ENCODE measurements at regions of chr20 and their contacts with region 1.

Region 1: DNA sequence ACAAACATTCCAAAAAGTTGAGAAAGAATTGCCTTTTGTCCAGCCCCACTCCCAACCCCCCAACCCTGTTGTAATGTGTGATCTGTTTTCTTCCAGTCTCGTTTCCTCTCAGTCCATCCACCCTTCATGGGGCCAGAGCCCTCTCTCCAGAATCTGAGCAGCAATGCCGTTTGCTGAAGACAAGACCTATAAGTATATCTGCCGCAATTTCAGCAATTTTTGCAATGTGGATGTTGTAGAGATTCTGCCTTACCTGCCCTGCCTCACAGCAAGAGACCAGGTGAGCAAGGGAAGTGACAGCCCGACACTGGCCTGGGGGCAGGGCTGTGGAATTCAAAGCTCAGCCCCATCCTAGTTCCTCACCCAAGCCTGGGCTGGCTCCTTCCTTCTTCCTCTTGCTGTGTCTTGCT is 7.8 kb downstream of the MAVS start:
- DNase-seq: no peak
- H3K4me3 ChIP-seq: no peak overlapping the region
- H3K4me3 Mint-ChIP-seq: no peak overlapping the region
- H3K27ac ChIP-seq: no peak overlapping the region
- H3K27ac Mint-ChIP-seq: peak overlapping the region in 3 of 7 donors; percentile 22 to 62 (median 24)
- H3K4me1 ChIP-seq: peaks cover 10% of the 10 kb centered on the region
- H3K4me1 Mint-ChIP-seq: peaks cover 8 to 20% (median 9%) of the 10 kb centered on the region in 4 donors
- H3K27me3 ChIP-seq: no peaks in the 10 kb centered on the region
- H3K27me3 Mint-ChIP-seq: no peaks in the 10 kb centered on the region

Region 2: GRCh38 chr20:3679749-3680700 is 174.4 kb before region 1 on chr20:
- CTCF ChIA-PET with region 1: interaction called, 5 read pairs
- POLR2A ChIA-PET with region 1: no interaction called
- intact Hi-C with region 1: loop called (anchors 1 kb)
- DNase-seq: no peak
- H3K4me3 ChIP-seq: no peak overlapping the region
- H3K4me3 Mint-ChIP-seq: peak overlapping the region in 1 of 8 donors; percentile 31
- H3K27ac ChIP-seq: no peak overlapping the region
- H3K27ac Mint-ChIP-seq: no peak overlapping the region
- H3K4me1 ChIP-seq: no peaks in the 10 kb centered on the region
- H3K4me1 Mint-ChIP-seq: peaks cover 3 to 9% (median 7%) of the 10 kb centered on the region in 4 donors
- H3K27me3 ChIP-seq: peaks cover 7% of the 10 kb centered on the region
- H3K27me3 Mint-ChIP-seq: peaks cover 38 to 48% of the 10 kb centered on the region in 2 donors

Region 3: DNA sequence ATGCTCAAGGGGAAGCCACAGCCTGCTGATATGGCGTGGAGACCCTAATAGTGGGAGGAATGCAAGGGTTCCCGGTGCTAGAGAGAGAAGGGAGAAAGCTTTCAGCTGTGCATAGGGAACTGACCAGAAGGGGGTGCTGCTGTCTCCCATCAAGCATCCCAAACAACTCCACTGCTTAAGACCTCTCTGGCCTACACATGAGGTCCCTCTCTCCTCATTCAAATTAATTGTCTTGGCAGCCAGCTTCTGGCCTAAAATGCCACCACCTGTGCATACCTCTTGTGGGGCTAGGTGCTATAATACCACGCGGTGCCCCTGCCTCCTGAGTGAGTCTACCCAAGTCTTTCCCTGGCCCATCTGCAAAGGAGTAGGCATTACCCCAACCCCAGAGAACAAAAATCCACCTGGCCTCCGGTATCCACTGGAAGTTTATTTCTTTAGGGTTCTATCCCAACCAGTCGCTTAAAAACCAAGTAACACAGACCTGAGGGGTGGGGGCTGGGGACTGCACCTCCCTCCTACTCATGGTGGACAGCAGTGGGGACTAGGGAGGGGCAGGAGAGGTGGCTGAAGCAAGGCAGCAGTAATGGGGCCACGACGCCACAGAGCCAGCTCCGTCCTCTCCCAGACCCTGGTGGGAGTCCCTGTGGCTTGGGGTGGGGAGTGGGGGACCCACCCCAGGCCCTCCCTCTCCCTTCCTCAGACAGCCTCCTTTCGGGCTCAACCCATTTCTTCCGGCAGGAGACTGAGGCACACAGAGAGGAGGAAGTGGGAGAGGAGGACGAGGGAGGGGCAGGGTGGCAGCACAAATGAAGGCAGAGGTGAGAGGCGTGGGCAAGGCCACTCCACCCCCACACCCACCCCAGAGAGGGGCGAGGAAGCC is 101.1 kb before region 1 on chr20:
- CTCF ChIA-PET with region 1: interaction called, 38 read pairs
- POLR2A ChIA-PET with region 1: interaction called, 4 read pairs
- intact Hi-C with region 1: loop called (anchors 1 kb)
- DNase-seq: peak; percentile 51 to 61 (median 57)
- H3K4me3 ChIP-seq: no peak overlapping the region
- H3K4me3 Mint-ChIP-seq: peak overlapping the region in 1 of 8 donors; percentile 17
- H3K27ac ChIP-seq: no peak overlapping the region
- H3K27ac Mint-ChIP-seq: peak overlapping the region in 4 of 7 donors; percentile 53 to 84 (median 66)
- H3K4me1 ChIP-seq: no peaks in the 10 kb centered on the region
- H3K4me1 Mint-ChIP-seq: peaks cover 2 to 14% (median 12%) of the 10 kb centered on the region in 4 donors
- H3K27me3 ChIP-seq: no peaks in the 10 kb centered on the region
- H3K27me3 Mint-ChIP-seq: peaks cover 0 to 2% of the 10 kb centered on the region in 2 donors

Region 4: DNA sequence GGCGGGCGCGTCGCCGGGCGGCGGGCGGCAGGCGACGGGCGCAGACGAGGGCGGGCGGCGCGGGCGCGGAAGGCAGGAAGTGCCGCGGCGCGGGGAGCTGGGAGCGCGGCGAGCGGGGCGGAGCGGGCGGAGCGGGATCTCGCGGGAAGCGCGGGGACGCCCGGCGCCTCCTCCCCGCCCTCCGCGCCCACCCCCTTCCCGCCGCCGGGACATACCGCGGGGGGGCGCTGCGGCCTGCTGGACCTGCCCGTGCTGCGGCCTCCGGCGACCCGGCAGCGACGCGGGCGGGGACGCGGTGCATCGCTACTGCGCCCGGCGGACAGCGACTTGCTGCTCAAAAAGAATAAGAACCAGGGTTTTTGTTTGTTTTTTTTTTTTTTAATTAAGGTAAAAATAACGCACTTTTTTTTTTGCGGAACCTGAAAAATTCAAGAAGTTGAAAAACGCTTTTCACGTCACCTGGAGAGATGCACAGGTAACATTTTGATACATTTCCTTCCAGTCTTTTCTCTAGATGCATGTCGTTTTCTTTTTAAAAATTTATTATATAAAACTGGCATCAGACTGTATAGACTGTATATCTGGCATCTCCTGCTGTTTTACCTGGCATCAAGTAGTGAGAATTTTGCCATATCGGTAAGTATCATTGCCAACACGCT is 67.7 kb before region 1 on chr20 and contains the start of gene CENPB:
- CTCF ChIA-PET with region 1: interaction called, 61 read pairs
- POLR2A ChIA-PET with region 1: interaction called, 7 read pairs
- intact Hi-C with region 1: loop called (anchors 1 kb)
- DNase-seq: peak; percentile 82 to 94 (median 88)
- H3K4me3 ChIP-seq: peak within 1 kb of the TSS; percentile 29 to 38
- H3K4me3 Mint-ChIP-seq: peak within 1 kb of the TSS; percentile 74 to 87 (median 84)
- H3K27ac ChIP-seq: peak within 1 kb of the TSS; percentile 12
- H3K27ac Mint-ChIP-seq: peak within 1 kb of the TSS; percentile 79 to 93 (median 88)
- H3K4me1 ChIP-seq: peaks cover 37% of the 10 kb centered on the region
- H3K4me1 Mint-ChIP-seq: peaks cover 23 to 41% (median 33%) of the 10 kb centered on the region in 4 donors
- H3K27me3 ChIP-seq: no peaks in the 10 kb centered on the region
- H3K27me3 Mint-ChIP-seq: no peaks in the 10 kb centered on the region
- total RNA-seq, gene CENPB: 52.2 to 56.7 TPM

Region 5: DNA sequence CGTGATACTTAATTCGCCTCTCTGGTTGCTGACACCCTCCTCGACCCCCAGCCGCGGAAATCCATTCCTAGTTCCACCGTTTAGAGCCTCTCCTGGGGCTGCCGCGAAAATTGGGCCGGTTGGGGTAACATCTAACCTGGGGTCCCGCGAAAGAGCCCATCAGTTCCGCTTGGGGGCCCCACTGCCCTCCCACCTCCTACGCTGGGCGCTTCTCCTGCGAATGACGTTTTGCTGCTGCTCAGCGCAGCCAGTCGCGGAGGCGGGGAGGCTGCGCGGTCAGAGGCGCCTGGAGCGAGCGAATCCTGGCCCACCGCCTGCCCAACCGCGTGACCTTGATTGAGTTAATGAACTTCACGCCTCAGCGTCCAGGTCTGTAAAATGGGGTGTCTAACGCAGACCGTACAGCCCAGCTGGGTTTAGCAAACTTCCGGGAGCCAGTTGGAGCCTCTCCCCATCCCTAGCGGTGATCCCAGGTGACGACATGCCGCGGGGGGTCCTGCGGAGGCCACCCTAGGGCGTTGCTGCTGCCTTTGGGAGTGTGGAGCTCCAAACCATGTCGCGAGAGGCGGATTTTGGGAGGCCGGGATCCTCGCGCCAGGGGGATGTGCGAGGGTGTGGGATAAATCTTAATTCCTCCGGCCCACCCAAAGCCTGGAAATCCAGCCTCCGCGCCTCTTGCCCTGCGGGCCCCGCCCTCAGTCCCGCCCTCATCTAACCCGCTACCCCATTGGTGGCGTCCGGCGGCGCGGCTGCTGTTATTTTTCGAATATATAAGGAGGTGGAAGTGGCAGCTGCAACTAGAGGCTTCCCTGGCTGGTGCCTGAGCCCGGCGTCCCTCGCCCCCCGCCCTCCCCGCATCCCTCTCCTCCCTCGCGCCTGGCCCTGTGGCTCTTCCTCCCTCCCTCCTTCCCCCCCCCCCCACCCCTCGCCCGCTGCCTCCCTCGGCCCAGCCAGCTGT is 58.7 kb before region 1 on chr20 and contains the start of gene CDC25B:
- CTCF ChIA-PET with region 1: interaction called, 7 read pairs
- POLR2A ChIA-PET with region 1: interaction called, 10 read pairs
- intact Hi-C with region 1: loop called (anchors 2 kb)
- DNase-seq: peak; percentile 83 to 94 (median 85)
- H3K4me3 ChIP-seq: peak within 1 kb of the TSS; percentile 94 to 97
- H3K4me3 Mint-ChIP-seq: peak within 1 kb of the TSS; percentile 98 to 100 (median 100)
- H3K27ac ChIP-seq: peak within 1 kb of the TSS; percentile 86
- H3K27ac Mint-ChIP-seq: peak within 1 kb of the TSS; percentile 95 to 99 (median 97)
- H3K4me1 ChIP-seq: peaks cover 38% of the 10 kb centered on the region
- H3K4me1 Mint-ChIP-seq: peaks cover 21 to 54% (median 35%) of the 10 kb centered on the region in 4 donors
- H3K27me3 ChIP-seq: no peaks in the 10 kb centered on the region
- H3K27me3 Mint-ChIP-seq: no peaks in the 10 kb centered on the region
- total RNA-seq, gene CDC25B: 410 to 420 TPM

Region 6: GRCh38 chr20:3820048-3820900 is 34.2 kb before region 1 on chr20 and contains the start of gene AP5S1:
- CTCF ChIA-PET with region 1: interaction called, 16 read pairs
- POLR2A ChIA-PET with region 1: interaction called, 11 read pairs
- intact Hi-C with region 1: loop called (anchors 2 kb)
- DNase-seq: peak; percentile 90 to 97 (median 91)
- H3K4me3 ChIP-seq: peak within 1 kb of the TSS; percentile 78 to 88
- H3K4me3 Mint-ChIP-seq: peak within 1 kb of the TSS; percentile 83 to 94 (median 91)
- H3K27ac ChIP-seq: peak within 1 kb of the TSS; percentile 99
- H3K27ac Mint-ChIP-seq: peak within 1 kb of the TSS; percentile 96 to 99 (median 99)
- H3K4me1 ChIP-seq: peaks cover 53% of the 10 kb centered on the region
- H3K4me1 Mint-ChIP-seq: peaks cover 30 to 66% (median 50%) of the 10 kb centered on the region in 4 donors
- H3K27me3 ChIP-seq: no peaks in the 10 kb centered on the region
- H3K27me3 Mint-ChIP-seq: no peaks in the 10 kb centered on the region
- total RNA-seq, gene AP5S1: 10.4 to 11.1 TPM

Region 7: DNA sequence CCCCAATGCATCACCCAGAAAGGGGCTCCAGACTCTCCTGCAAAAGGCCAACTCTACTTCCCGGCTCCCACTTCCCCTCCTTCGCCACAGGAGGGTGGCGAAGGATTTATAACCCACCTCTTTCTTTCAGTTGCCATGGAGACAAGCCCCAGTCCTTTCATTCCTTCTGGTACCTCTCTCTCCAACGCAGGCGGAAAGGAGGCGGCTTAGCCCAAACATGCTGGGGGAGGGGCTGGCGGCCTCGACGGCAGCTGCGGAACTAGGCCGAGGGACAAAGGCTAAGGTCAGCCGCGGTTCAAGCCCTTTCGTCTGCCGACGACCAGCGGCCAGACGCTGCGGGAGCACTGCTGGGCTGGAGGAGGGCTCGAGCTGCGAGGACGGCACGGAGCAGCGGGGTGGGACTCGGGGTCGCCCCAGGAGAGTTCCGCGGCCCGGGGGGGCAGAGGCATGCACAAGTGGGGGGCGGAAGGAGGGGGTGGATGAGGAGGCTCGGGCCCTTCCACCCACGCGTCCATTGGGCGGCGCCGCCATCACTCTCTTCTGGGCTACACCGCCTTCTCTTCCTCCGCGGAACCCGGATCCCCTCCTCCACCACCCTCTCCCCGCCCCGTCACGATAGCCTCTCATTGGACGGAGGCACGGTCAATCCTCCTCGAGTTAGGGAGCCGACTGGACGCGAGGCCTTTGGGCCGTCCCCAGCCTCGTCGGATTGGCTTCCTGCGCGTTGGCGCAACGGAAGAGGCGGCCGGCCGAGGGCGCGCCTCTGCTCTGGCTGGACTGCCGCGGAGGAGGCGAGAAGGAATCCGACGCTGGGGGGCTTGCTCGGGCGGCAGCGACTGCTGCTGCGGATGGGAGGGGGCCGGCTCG is 34.4 kb after region 1 on chr20 and contains the start of gene PANK2:
- CTCF ChIA-PET with region 1: interaction called, 10 read pairs
- POLR2A ChIA-PET with region 1: no interaction called
- intact Hi-C with region 1: no loop called
- DNase-seq: peak; percentile 95 to 98 (median 96)
- H3K4me3 ChIP-seq: peak within 1 kb of the TSS; percentile 96 to 98
- H3K4me3 Mint-ChIP-seq: peak within 1 kb of the TSS; percentile 96 to 100 (median 98)
- H3K27ac ChIP-seq: peak within 1 kb of the TSS; percentile 79
- H3K27ac Mint-ChIP-seq: peak within 1 kb of the TSS; percentile 96 to 98 (median 97)
- H3K4me1 ChIP-seq: peaks cover 46% of the 10 kb centered on the region
- H3K4me1 Mint-ChIP-seq: peaks cover 34 to 68% (median 47%) of the 10 kb centered on the region in 4 donors
- H3K27me3 ChIP-seq: no peaks in the 10 kb centered on the region
- H3K27me3 Mint-ChIP-seq: no peaks in the 10 kb centered on the region
- total RNA-seq, gene PANK2: 71.4 to 80.5 TPM